ENCODE measurements at regions of chr1 and their contacts with region 1.

Region 1: DNA sequence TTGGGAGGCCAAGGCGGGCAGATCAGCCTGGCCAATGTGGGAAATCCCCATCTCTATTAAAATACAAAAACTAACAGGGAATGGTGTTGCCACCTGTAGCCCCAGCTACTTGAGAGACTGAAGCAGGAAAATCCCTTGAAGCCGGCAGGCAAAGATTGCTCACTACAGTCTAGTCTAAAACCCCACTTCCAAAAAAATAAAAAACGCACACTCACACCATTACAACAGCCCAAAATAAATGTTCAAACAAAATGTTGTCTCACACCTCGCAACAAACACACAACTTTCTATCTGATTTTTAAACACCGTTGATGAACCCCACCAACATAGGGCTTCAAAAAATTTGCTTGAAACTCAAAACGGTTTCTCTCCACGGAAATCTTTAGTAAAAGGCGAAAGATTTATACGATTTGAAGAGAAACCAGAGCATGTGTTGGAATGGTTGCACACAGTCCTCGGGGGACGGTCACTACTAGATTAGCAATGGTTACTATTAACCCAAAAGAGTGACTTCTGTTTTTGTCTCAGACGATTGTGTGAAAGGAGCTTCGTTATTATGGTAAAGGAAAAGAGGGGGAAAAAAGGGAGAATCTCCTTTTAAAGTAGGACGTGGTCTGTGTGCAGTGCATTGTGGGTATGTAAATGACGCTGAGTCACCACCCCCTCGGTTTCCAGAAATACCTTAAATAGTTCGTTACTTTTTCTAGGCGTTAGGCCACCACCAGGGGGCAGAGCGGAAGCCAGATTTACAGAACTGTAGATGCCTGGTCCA is at the start of gene RNU5D-1:
- DNase-seq: peak; percentile 98
- ATAC-seq: peak; percentile 87
- H3K4me3 ChIP-seq: peak within 1 kb of the TSS; percentile 47; the same call in 1 of the 2 replicates
- H3K27ac ChIP-seq: peak within 1 kb of the TSS; percentile 100
- H3K4me1 ChIP-seq: peaks cover 14% of the 10 kb centered on the region
- H3K27me3 ChIP-seq: no peaks in the 10 kb centered on the region
- CTCF ChIP-seq: peak; percentile 72 to 88 (median 83)
- EP300 ChIP-seq: peak in 1 of 2 experiments; percentile 44; a peak in 1 of 4 replicates
- POLR2A ChIP-seq: peak; percentile 96
- RAD21 ChIP-seq: peak; percentile 58
- polyA plus RNA-seq, gene RNU5D-1: not detected

Region 2: GRCh38 chr1:44714944-44715571 is 15.9 kb before region 1 on chr1:
- CTCF ChIA-PET with region 1: interaction called, 175 read pairs
- POLR2A ChIA-PET with region 1: interaction called, 110 read pairs
- RAD21 ChIA-PET with region 1: interaction called, 17 read pairs
- SMC1A ChIA-PET with region 1: interaction called, 73 read pairs
- in situ Hi-C with region 1: no loop called
- intact Hi-C with region 1: no loop called
- DNase-seq: peak; percentile 71
- ATAC-seq: peak; percentile 75
- H3K4me3 ChIP-seq: no peak overlapping the region
- H3K27ac ChIP-seq: peak overlapping the region; percentile 61
- H3K4me1 ChIP-seq: peaks cover 56% of the 10 kb centered on the region
- H3K27me3 ChIP-seq: no peaks in the 10 kb centered on the region
- CTCF ChIP-seq: peak; percentile 89 to 96 (median 90)
- EP300 ChIP-seq: no peak
- POLR2A ChIP-seq: no peak
- RAD21 ChIP-seq: peak; percentile 75

Region 3: DNA sequence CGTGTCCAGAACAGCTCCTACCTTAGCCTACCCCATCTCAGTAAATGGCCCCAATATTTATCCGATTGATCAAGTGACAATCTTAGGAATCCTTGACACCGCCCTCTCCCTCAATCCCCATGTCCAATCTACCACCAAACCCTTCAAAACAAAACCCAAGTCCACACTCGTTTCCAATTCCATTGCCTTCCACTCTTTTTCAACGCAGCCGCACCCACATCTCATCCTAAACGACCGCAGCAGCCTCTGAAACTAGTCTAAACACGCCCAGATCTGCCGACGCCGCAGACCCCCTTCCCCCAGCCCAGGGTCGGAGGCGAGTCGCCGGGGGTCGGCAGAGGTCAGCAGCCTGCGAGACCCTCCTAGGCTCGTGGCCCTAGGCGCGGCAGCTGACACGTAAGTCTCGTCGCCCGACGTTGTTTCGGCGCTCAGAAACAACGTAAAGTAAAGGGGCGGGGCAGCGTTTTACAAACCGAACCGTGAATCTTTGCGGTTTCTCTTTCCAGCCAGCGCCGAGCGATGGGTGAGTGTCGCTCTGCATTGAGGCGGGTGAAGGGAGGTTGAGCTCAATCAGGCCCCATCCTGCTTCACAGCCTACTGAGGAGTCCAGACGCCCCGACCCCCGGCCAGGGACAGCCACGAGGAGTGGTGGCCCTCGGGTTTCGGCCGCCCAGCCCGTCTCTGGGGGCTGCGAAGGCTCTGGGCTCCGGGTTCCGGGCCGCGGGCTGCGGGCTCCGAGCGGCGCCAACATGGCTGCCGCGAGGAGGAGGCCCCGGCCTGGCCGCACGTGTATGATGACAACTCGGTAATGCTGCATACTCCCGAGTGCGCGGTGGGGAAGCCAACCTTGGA is 44.4 kb after region 1 on chr1 and contains the start of gene RPS8:
- CTCF ChIA-PET with region 1: interaction called, 39 read pairs
- POLR2A ChIA-PET with region 1: interaction called, 19 read pairs
- RAD21 ChIA-PET with region 1: interaction called, 3 read pairs
- SMC1A ChIA-PET with region 1: interaction called, 12 read pairs
- in situ Hi-C with region 1: no loop called
- intact Hi-C with region 1: loop called (anchors 2 kb)
- DNase-seq: peak; percentile 74
- ATAC-seq: peak; percentile 81
- H3K4me3 ChIP-seq: peak within 1 kb of the TSS; percentile 73
- H3K27ac ChIP-seq: peak within 1 kb of the TSS; percentile 92
- H3K4me1 ChIP-seq: peaks cover 13% of the 10 kb centered on the region
- H3K27me3 ChIP-seq: no peaks in the 10 kb centered on the region
- CTCF ChIP-seq: no peak
- EP300 ChIP-seq: no peak
- POLR2A ChIP-seq: peak; percentile 99
- RAD21 ChIP-seq: no peak
- polyA plus RNA-seq, gene RPS8: 2,238 to 3,059 TPM

Region 4: GRCh38 chr1:44792783-44793714 is 62.1 kb after region 1 on chr1:
- CTCF ChIA-PET with region 1: interaction called, 15 read pairs
- POLR2A ChIA-PET with region 1: interaction called, 3 read pairs
- RAD21 ChIA-PET with region 1: interaction called, 4 read pairs
- SMC1A ChIA-PET with region 1: interaction called, 5 read pairs
- in situ Hi-C with region 1: no loop called
- intact Hi-C with region 1: no loop called
- DNase-seq: no peak
- ATAC-seq: no peak
- H3K4me3 ChIP-seq: no peak overlapping the region
- H3K27ac ChIP-seq: no peak overlapping the region
- H3K4me1 ChIP-seq: no peaks in the 10 kb centered on the region
- H3K27me3 ChIP-seq: no peaks in the 10 kb centered on the region
- CTCF ChIP-seq: no peak
- EP300 ChIP-seq: no peak
- POLR2A ChIP-seq: no peak
- RAD21 ChIP-seq: no peak

Region 5: GRCh38 chr1:44807262-44808062 is 76.5 kb after region 1 on chr1 and contains the start of gene DYNLT4:
- CTCF ChIA-PET with region 1: interaction called, 11 read pairs
- POLR2A ChIA-PET with region 1: interaction called, 34 read pairs
- RAD21 ChIA-PET with region 1: interaction called, 24 read pairs
- SMC1A ChIA-PET with region 1: interaction called, 9 read pairs
- in situ Hi-C with region 1: loop called (anchors 5 kb)
- intact Hi-C with region 1: no loop called
- DNase-seq: peak; percentile 65
- ATAC-seq: peak; percentile 64
- H3K4me3 ChIP-seq: no peak within 1 kb of the TSS
- H3K27ac ChIP-seq: peak within 1 kb of the TSS; percentile 95
- H3K4me1 ChIP-seq: peaks cover 53% of the 10 kb centered on the region
- H3K27me3 ChIP-seq: no peaks in the 10 kb centered on the region
- CTCF ChIP-seq: no peak
- EP300 ChIP-seq: peak in 1 of 2 experiments; percentile 44; a peak in 2 of 4 replicates
- POLR2A ChIP-seq: no peak; the same call in none of the 2 replicates
- RAD21 ChIP-seq: no peak
- polyA plus RNA-seq, gene DYNLT4: not detected

Region 6: DNA sequence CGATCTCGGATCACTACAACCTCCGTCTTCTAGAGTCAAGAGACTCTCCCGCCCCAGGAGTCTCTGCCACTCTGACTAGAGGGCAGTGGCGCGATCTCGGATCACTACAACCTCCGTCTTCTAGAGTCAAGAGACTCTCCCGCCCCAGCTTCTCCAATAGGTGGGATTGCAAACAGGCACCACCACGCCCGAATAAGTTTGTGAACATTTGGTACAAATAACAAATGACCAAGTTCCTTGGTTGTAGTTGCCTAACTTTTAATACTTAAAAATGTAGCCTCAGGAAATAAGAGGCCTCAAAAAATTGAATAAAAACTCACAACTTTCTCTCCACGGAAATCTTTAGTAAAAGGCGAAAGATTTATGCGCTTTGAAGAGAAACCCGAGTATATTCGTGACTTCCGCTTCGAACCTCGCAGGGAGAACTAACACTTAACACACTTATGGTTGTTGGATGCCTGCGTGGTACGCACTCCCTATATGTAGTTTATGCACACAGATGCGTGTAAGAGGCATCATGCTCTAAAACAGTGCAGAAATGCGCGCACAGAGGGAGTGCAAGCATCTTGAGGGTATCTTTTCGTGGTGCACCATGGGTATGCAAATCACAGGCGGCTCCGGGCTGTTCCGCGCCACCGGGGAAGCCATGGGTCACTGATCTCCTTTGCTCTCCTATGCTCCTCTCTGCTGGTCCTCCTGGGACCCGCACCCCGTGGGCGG is 88.8 kb after region 1 on chr1:
- CTCF ChIA-PET with region 1: interaction called, 16 read pairs
- POLR2A ChIA-PET with region 1: interaction called, 7 read pairs
- RAD21 ChIA-PET with region 1: interaction called, 4 read pairs
- SMC1A ChIA-PET with region 1: interaction called, 13 read pairs
- in situ Hi-C with region 1: no loop called
- intact Hi-C with region 1: loop called (anchors 1 kb)
- DNase-seq: peak; percentile 90
- ATAC-seq: peak; percentile 96
- H3K4me3 ChIP-seq: peak overlapping the region; percentile 36; the same call in 1 of the 2 replicates
- H3K27ac ChIP-seq: peak overlapping the region; percentile 100
- H3K4me1 ChIP-seq: peaks cover 6% of the 10 kb centered on the region
- H3K27me3 ChIP-seq: no peaks in the 10 kb centered on the region
- CTCF ChIP-seq: peak in 2 of 3 experiments; percentile 15 to 29; a peak in 2 of 6 replicates
- EP300 ChIP-seq: peak in 1 of 2 experiments; percentile 1; a peak in 1 of 4 replicates
- POLR2A ChIP-seq: peak; percentile 100
- RAD21 ChIP-seq: peak; percentile 26; the same call in 1 of the 2 replicates